ENCODE measurements at regions of chr18 and their contacts with region 1.

Region 1: DNA sequence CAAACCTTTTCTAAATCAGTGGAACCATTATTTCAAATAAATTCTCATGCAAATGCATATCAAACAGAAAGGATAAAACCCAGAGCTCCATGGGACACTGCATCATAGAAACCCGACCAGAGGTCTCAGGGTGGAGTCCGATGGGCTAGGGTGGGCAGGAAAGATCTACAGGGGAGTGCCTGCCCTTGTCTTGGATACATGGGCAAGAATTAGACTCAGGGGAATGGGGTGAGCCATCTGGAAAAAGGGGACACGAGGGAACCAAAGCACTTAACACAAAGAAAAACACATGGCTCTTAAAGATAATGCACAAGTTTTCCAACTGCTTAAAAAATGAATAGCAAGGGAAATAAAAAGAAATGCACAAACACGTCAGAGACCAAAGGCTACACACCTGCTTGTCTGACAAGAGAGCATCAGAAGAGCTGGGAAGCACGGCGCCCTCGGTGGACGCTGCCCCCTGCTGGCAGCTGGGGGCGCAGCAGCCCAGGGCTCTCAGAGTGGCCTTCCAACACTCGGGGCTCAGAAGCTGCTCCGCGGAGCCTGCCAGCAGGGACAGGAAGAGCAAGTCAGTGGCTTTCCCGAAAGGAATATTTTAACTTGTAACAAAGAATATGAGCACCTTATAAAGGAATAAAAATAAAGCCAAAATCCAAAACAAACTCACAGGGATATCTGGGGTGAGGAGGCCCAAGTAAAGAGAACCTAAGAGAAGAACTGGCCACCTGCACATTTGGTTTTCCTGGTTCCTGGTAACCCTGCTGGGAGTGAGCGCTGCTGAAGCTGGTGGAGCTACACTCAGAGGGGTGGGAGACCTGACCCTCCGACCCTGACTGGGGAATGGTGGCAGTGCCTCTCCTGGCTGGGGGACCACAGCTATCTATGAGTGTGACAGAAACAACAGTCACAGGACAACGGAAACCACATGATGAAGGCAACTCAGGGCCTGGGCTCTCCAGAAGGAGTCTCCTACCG is 54.5 kb downstream of the SIGLEC15 start:
- DNase-seq: peak; percentile 28 to 48
- ATAC-seq: peak; percentile 97 to 98
- H3K4me3 ChIP-seq: no peak overlapping the region
- H3K27ac ChIP-seq: no peak overlapping the region
- H3K4me1 ChIP-seq: no peaks in the 10 kb centered on the region
- CTCF ChIP-seq: peak; percentile 81
- EP300 ChIP-seq: no peak
- POLR2A ChIP-seq: no peak
- RAD21 ChIP-seq: peak; percentile 72 to 75

Region 2: DNA sequence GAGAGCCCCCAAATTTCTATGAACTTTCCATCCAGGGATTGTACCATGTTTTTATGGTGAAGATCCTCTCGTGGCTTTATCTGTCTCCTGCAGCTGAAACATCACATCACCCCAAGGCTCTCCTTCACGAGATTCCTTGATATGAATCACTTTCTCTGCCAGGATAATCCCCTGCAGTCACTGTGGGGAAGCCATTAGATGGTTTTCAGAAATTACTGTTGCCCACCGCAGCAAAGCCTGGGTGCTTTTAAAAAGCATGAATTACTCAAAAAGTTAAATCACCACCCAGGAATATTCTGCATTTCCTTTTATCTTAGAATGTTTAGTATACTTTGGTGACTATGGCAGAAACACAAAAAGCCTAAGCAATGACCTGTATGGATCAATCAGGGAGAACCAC is 693.1 kb before region 1 on chr18:
- CTCF ChIA-PET with region 1: no interaction called
- POLR2A ChIA-PET with region 1: no interaction called
- DNase-seq: no peak
- ATAC-seq: no peak
- H3K4me3 ChIP-seq: no peak overlapping the region
- H3K27ac ChIP-seq: no peak overlapping the region
- H3K4me1 ChIP-seq: no peaks in the 10 kb centered on the region
- CTCF ChIP-seq: no peak
- EP300 ChIP-seq: no peak
- POLR2A ChIP-seq: no peak
- RAD21 ChIP-seq: no peak

Region 3: GRCh38 chr18:45236676-45237075 is 643.3 kb before region 1 on chr18:
- CTCF ChIA-PET with region 1: no interaction called
- POLR2A ChIA-PET with region 1: no interaction called
- DNase-seq: no peak
- ATAC-seq: no peak
- H3K4me3 ChIP-seq: no peak overlapping the region
- H3K27ac ChIP-seq: no peak overlapping the region
- H3K4me1 ChIP-seq: no peaks in the 10 kb centered on the region
- CTCF ChIP-seq: no peak
- EP300 ChIP-seq: no peak
- POLR2A ChIP-seq: no peak
- RAD21 ChIP-seq: no peak

Region 4: GRCh38 chr18:45608400-45608799 is 271.6 kb before region 1 on chr18:
- CTCF ChIA-PET with region 1: no interaction called
- POLR2A ChIA-PET with region 1: no interaction called
- DNase-seq: no peak
- ATAC-seq: no peak
- H3K4me3 ChIP-seq: no peak overlapping the region
- H3K27ac ChIP-seq: no peak overlapping the region
- H3K4me1 ChIP-seq: no peaks in the 10 kb centered on the region
- CTCF ChIP-seq: no peak
- EP300 ChIP-seq: no peak
- POLR2A ChIP-seq: no peak
- RAD21 ChIP-seq: no peak

Region 5: DNA sequence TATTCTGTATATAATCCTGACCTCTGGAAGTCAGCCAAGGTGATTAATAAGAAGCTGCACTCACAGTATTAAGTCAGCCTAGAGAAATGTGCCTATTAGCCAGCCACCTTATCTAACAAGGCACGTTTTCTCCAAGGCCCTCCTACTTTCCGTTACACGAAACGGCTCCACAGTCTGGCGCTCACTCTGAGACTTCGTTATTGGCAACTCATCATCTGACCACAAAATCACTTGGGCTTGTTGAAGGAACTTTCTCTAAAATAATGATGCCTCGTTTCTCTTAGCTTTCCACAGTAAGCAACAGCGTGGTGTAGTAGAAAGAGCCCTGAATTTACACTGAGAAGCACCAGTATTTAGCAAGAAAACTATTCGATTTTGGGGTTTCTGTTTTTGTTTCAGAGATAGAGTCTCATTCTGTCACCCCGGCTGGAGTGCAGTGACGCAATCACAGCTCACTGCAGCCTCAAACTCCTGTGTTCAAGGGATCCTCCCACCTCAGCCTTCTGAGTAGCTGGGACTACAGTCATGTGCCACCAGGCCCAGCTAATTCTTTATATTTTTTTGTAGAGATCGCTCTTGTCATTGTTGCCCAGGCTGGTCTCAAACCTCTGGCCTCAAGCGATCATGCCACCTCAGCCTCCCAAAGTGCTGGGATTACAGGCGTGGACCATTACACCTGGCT is 209.5 kb before region 1 on chr18:
- CTCF ChIA-PET with region 1: interaction called, 44 read pairs
- POLR2A ChIA-PET with region 1: no interaction called
- DNase-seq: no peak
- ATAC-seq: no peak
- H3K4me3 ChIP-seq: no peak overlapping the region
- H3K27ac ChIP-seq: no peak overlapping the region
- H3K4me1 ChIP-seq: no peaks in the 10 kb centered on the region
- CTCF ChIP-seq: no peak
- EP300 ChIP-seq: no peak
- POLR2A ChIP-seq: no peak
- RAD21 ChIP-seq: no peak

Region 6: GRCh38 chr18:45722899-45723298 is 157.1 kb before region 1 on chr18:
- CTCF ChIA-PET with region 1: interaction called, 15 read pairs
- POLR2A ChIA-PET with region 1: no interaction called
- DNase-seq: peak; percentile 60 to 70
- ATAC-seq: peak; percentile 98 to 99
- H3K4me3 ChIP-seq: no peak overlapping the region
- H3K27ac ChIP-seq: no peak overlapping the region
- H3K4me1 ChIP-seq: no peaks in the 10 kb centered on the region
- CTCF ChIP-seq: peak; percentile 55
- EP300 ChIP-seq: no peak
- POLR2A ChIP-seq: no peak
- RAD21 ChIP-seq: peak; percentile 75

Region 7: GRCh38 chr18:45890606-45891005 is 10.6 kb after region 1 on chr18:
- CTCF ChIA-PET with region 1: interaction called, 10 read pairs
- POLR2A ChIA-PET with region 1: no interaction called
- DNase-seq: no peak
- ATAC-seq: no peak
- H3K4me3 ChIP-seq: no peak overlapping the region
- H3K27ac ChIP-seq: no peak overlapping the region
- H3K4me1 ChIP-seq: no peaks in the 10 kb centered on the region
- CTCF ChIP-seq: no peak
- EP300 ChIP-seq: no peak
- POLR2A ChIP-seq: no peak
- RAD21 ChIP-seq: no peak

Region 8: GRCh38 chr18:46035696-46036680 is 156.0 kb after region 1 on chr18:
- CTCF ChIA-PET with region 1: no interaction called
- POLR2A ChIA-PET with region 1: no interaction called
- DNase-seq: no peak
- ATAC-seq: no peak
- H3K4me3 ChIP-seq: no peak overlapping the region
- H3K27ac ChIP-seq: no peak overlapping the region
- H3K4me1 ChIP-seq: no peaks in the 10 kb centered on the region
- CTCF ChIP-seq: no peak
- EP300 ChIP-seq: no peak
- POLR2A ChIP-seq: no peak
- RAD21 ChIP-seq: no peak

Measured in A549 (cell line).